ENCODE measurements at regions of chr10 and their contacts with region 1.

Region 1: DNA sequence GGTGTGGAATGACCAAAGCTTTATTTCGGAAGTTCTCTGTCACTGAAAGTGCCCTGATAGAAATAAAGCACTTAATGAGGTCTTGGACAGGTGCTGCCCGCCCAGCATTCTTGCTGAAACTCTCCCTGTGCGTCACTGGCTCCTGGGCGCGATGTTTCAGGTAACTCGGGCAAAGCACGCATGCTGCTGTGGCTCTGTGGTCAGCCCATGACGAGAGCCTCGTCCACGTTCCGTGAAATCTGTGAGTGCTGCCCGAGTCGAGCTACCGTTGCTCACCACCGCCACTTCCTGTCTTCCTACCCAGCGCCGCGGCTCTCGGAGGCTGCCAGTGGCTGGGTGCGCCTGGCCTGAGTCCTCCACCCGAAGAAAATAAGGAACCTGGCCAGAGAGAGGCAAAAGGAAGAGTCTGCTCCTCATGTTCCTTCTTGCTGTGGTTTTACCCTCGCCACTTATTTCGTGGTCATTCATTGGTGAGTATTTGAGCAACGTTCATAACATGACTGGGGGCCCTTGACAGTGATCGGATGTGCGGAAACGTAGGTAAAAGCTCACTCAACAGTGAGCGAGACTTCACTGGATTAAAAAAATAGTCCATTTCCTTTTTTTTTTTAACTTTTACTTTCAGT is 95.5 kb downstream of the MAP3K8 start:
- DNase-seq: peak; percentile 79
- H3K4me3 Mint-ChIP-seq: peak overlapping the region; percentile 81
- H3K27ac Mint-ChIP-seq: peak overlapping the region; percentile 89
- H3K4me1 Mint-ChIP-seq: peaks cover 74% of the 10 kb centered on the region
- H3K27me3 Mint-ChIP-seq: no peaks in the 10 kb centered on the region

Region 2: GRCh38 chr10:30413996-30414576 is 115.4 kb before region 1 on chr10:
- intact Hi-C with region 1: loop called (anchors 1 kb)
- DNase-seq: no peak
- H3K4me3 Mint-ChIP-seq: no peak overlapping the region
- H3K27ac Mint-ChIP-seq: no peak overlapping the region
- H3K4me1 Mint-ChIP-seq: peaks cover 34% of the 10 kb centered on the region
- H3K27me3 Mint-ChIP-seq: no peaks in the 10 kb centered on the region

Region 3: DNA sequence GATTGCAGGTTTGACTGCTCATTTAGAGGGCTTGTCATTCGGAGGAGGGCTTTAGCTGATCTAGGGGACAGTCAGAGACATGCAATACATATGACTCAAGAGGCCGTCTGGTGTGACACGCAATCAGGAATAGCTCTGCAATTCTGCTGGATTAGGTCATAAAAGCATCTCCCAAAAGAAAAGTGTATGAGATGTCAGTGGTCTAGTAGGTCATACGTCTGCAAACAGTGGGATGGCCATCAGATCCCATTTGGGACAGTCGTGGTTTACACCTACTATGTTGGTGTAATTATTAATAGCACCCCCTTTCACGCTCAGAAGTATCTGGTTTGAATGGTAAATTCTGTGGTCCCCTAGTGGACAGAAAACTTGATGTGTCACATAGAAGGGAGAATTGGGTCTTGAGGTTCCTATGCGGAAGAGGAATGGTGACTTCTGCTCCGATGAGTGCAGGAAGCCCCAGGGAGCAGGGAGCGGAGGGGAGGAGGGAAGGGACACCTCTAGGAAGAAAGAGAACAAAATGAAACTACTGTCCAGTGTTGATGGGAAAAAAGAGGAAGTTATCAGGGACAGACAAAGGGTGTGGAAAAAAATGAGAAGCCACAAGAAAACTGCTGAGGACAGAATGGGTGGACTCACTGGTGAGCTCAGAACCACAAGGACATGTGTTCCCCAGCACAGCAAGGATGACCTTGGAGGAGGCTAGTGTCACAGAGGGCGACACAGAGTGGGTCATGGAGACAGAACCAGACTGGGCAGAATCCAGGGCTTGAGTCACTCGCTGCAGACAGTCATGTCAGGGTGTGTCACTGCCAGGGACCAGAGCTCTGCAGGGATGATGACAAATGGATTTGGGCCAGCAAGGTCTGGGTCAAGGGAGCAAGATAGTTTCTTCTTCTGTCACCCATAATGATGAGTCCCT is 35.6 kb before region 1 on chr10:
- intact Hi-C with region 1: loop called (anchors 5 kb)
- DNase-seq: no peak
- H3K4me3 Mint-ChIP-seq: peak overlapping the region; percentile 8
- H3K27ac Mint-ChIP-seq: peak overlapping the region; percentile 30
- H3K4me1 Mint-ChIP-seq: peaks cover 86% of the 10 kb centered on the region
- H3K27me3 Mint-ChIP-seq: peaks cover 5% of the 10 kb centered on the region

Region 4: GRCh38 chr10:30502266-30503060 is 27.0 kb before region 1 on chr10:
- intact Hi-C with region 1: loop called (anchors 1 kb)
- DNase-seq: peak; percentile 67
- H3K4me3 Mint-ChIP-seq: peak overlapping the region; percentile 3
- H3K27ac Mint-ChIP-seq: peak overlapping the region; percentile 62
- H3K4me1 Mint-ChIP-seq: peaks cover 81% of the 10 kb centered on the region
- H3K27me3 Mint-ChIP-seq: no peaks in the 10 kb centered on the region

Region 5: DNA sequence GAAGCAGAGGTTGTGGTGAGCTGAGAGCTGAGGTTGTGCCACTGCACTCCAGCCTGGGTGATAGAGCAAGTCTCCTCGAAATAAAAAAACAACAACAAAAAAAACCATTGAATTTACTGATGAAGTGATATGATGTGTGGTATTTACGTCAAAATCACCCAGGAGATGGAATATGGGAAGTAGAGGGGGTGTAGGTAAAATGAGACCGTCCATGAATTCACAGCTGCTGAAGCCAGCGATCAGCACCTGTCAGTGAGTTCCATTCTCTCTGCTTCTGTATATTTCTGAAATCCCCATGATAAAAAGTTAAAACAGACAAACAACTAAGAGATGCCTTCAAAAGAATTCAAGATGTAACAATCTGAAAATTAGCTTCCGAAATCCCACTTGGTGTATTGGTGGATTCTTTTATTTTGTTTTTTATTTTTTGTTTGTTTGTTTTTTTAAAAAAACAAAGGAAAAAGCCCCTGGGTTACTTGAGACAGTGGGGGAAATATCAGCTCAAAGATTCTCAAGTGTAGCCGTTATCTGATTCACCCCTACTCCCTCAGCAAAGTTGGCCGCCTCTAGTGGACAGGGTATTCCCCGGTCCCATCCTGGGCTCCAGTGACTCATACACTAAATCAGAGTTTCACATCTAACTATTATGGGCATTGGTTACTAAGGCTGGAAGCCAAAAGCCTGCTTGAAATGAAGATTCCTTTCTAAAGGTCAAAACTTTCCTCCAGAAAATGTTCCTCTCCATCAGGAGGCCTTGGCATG is 19.1 kb before region 1 on chr10:
- intact Hi-C with region 1: loop called (anchors 1 kb)
- DNase-seq: no peak
- H3K4me3 Mint-ChIP-seq: no peak overlapping the region
- H3K27ac Mint-ChIP-seq: peak overlapping the region; percentile 20
- H3K4me1 Mint-ChIP-seq: peaks cover 40% of the 10 kb centered on the region
- H3K27me3 Mint-ChIP-seq: no peaks in the 10 kb centered on the region